Common myeloid progenitor, CD34-positive (primary cell): ENCODE measurements at regions of chr12 and their contacts with region 1.

Region 1: DNA sequence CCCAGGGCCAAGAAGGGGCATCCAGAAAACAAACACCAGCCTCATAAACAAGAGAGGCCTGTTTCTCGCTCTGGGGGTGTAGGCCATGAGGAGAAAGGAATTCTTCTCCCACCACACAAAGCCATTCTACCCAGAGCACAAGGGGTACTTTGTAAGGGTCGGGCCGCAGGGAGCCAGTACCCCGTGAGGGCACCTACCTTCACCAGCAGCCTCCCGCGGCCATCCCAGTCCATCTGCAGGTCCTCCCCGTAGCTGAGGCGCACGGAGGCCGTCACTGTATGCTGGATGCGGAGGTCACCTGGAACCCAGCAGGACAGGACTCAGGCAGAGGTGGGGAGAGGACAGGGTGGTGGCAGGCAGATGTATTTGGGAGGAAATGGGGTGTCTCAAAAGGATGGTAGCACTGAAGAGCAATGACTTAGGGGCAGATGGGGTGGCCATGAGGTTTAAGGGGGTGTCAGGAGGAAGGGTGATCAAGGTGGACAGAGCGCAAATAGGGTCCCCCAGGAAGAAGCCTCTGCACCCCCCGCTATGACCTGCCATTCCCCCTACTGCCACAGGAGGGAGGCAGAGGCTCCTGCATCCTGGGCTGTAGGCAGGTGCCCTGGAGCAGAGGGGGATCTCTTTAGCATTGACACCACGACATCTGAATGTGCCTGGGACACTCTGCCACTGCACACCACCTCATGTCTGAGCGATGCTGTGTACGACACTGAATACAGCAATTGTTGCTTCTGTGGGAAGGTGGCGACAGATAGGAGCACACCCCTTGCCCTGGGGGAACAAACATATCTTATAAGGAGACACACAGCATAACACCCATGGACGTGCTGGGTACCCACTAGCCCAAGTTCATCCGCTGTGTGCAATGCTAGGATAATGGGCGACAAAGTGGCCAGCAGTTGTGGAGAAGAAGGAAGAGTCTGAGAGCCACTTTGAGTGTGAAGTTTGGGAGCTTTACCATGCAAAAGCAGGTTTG is 61.4 kb downstream of the VWF start:
- DNase-seq: peak; percentile 67 to 84 (median 75)
- H3K4me3 ChIP-seq: no peak overlapping the region
- H3K27ac ChIP-seq: no peak overlapping the region
- H3K4me1 ChIP-seq: peaks cover 0 to 14% (median 7%) of the 10 kb centered on the region in 4 experiments
- H3K27me3 ChIP-seq: no peaks in the 10 kb centered on the region

Region 2: DNA sequence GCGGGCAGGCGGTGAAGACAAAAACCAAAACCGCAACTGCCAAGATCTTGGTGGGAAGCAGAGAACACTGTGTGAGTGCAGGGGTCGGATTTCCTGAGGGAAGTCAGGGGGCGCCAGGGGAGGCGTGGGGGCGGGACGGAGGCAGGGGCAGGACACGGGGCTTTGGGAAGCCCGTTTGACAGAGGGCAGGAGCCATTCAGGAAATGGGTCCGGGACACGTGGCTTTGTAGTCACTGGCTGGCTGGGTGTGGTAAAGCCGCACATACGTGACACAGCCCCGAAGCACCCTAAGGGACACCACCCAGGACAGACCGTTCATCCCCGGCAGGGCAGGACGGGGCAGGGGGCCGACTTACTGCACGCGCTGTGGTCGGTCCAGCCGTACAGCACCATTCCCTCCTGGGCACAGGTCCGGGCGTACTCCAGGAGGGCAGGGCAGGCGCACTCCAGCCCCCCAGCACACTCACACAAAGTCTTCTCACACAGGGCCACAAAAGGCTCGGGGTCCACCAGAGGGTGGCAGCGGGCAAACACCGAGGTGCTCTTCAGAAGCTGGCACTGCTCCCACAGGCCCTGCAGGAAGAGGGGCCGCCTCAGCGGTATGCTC is 12.0 kb after region 1 on chr12:
- CTCF ChIA-PET with region 1: interaction called, 14 read pairs
- POLR2A ChIA-PET with region 1: no interaction called
- DNase-seq: peak; percentile 68 to 84 (median 73)
- H3K4me3 ChIP-seq: peak overlapping the region in 6 of 7 experiments; percentile 19 to 69 (median 51)
- H3K27ac ChIP-seq: peak overlapping the region in 1 of 2 experiments; percentile 50
- H3K4me1 ChIP-seq: peaks cover 19 to 49% (median 38%) of the 10 kb centered on the region in 4 experiments
- H3K27me3 ChIP-seq: no peaks in the 10 kb centered on the region

Region 3: GRCh38 chr12:6233121-6233971 is 170.3 kb after region 1 on chr12:
- CTCF ChIA-PET with region 1: interaction called, 12 read pairs
- POLR2A ChIA-PET with region 1: no interaction called
- DNase-seq: peak; percentile 31 to 61 (median 52)
- H3K4me3 ChIP-seq: no peak overlapping the region
- H3K27ac ChIP-seq: no peak overlapping the region
- H3K4me1 ChIP-seq: peaks cover 2 to 64% (median 45%) of the 10 kb centered on the region in 4 experiments
- H3K27me3 ChIP-seq: no peaks in the 10 kb centered on the region

Region 4: DNA sequence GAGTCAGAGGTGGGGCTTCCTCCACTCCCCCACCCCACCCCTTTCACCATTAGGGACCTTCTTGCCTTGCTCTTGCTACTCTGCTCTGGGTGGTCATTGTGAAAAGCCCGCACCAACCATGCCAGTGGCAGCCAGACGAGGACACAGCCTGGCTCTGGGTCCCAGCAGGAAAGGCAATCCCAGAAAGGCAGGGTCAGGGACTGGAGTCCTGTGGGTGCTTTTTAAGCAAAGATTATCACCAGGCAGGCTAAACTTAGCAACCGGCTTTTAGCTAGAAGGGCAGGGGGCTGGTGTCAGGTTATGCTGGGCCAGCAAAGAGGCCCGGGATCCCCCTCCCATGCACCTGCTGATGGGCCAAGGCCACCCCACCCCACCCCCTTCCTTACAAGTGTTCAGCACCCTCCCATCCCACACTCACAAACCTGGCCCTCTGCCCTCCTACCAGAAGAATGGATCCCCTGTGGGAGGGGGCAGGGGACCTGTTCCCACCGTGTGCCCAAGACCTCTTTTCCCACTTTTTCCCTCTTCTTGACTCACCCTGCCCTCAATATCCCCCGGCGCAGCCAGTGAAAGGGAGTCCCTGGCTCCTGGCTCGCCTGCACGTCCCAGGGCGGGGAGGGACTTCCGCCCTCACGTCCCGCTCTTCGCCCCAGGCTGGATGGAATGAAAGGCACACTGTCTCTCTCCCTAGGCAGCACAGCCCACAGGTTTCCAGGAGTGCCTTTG is 470.0 kb after region 1 on chr12:
- CTCF ChIA-PET with region 1: no interaction called
- POLR2A ChIA-PET with region 1: no interaction called
- DNase-seq: peak in 2 of 3 donors; percentile 21 to 46
- H3K4me3 ChIP-seq: peak overlapping the region; percentile 83 to 96 (median 89)
- H3K27ac ChIP-seq: peak overlapping the region; percentile 89 to 94
- H3K4me1 ChIP-seq: peaks cover 5 to 54% (median 52%) of the 10 kb centered on the region in 4 experiments
- H3K27me3 ChIP-seq: no peaks in the 10 kb centered on the region